ENCODE measurements at regions of chr3 and their contacts with region 1.

Region 1: GRCh38 chr3:126937973-126938372 is 44.9 kb upstream of the PLXNA1 start:
- DNase-seq: no peak
- H3K4me3 ChIP-seq: no peak overlapping the region
- H3K27me3 ChIP-seq: no peaks in the 10 kb centered on the region
- CTCF ChIP-seq: no peak

Region 2: DNA sequence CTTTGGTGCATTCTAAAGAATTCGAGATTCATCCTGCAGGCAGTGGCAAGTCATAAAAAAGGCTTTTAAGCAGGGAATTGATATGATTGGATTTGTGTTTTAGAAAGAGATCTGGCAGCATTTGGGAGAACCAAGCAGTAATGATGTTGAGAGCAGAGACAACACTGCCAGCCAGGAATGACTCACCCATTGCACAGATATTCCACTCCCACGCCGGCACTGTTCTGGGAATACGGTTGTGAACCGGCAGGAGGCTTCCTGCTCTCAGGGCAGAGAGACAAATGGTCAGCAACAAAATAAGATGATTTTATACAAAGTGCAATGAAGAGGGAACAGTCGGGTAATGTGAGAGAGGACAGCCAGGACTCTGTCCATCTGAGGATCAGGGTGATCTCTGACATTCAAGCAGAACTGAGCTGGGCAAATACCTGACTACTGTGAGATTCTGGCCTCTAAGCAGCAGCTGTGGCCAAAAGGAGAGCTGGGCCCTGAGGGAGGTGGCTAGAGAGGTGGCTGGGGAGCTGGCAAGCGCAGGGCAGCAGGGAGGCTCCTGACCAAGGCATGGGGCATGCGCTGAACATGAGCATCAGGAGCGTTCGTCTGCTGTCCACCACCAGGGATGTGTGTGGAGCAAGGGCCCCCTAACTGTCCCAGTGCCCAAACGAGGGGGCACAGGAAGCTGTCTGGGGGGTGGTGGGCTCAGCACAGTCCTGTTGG is 11.1 kb before region 1 on chr3:
- CTCF ChIA-PET with region 1: interaction called, 10 read pairs
- POLR2A ChIA-PET with region 1: no interaction called
- DNase-seq: peak; percentile 42
- H3K4me3 ChIP-seq: no peak overlapping the region
- H3K27me3 ChIP-seq: no peaks in the 10 kb centered on the region
- CTCF ChIP-seq: peak; percentile 55